ENCODE measurements at regions of chr17 and their contacts with region 1.

Region 1: DNA sequence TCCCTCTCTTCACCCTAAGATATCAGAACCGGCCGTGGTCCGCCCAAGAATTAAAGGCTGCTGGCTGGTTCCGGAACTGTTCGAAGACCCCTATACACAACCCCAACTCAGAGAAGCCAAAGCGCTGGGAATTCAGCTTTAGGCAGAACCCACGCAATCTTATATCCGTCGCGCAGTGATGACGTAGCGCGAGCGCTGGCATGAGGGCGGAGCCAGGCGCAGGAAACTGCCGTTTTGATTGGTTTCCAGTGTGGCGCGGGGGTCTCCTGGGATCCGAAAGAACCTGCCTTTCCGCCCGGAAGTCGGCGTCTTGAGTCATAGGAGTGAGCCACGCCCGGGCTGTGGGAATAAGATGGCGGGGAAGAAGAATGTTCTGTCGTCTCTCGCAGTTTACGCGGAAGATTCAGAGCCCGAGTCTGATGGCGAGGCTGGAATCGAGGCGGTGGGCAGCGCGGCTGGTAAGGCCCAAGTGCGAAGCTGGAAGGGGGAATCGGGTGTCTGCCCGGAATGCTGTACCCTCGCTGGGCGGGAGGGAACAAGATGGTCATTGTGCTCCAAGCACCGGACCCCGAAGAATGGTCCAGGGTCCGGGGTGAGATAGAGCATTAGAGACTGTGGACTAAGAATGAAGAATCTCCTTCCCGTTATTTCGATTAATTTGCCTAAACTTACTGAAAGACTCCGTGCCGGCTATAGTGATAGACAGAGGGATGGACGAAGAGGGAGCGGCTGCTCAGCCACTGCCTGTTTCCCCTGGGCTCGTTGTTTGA is at the starts of genes RECQL5 and SAP30BP:
- DNase-seq: peak; percentile 100
- H3K4me3 Mint-ChIP-seq: no peak within 1 kb of the TSS
- H3K27ac Mint-ChIP-seq: no peak within 1 kb of the TSS
- H3K4me1 Mint-ChIP-seq: peaks cover 19% of the 10 kb centered on the region
- H3K27me3 Mint-ChIP-seq: no peaks in the 10 kb centered on the region
- total RNA-seq, gene RECQL5: 34.2 and 34.4 TPM in 2 replicates
- total RNA-seq, gene SAP30BP: 109 and 115 TPM in 2 replicates

Region 2: DNA sequence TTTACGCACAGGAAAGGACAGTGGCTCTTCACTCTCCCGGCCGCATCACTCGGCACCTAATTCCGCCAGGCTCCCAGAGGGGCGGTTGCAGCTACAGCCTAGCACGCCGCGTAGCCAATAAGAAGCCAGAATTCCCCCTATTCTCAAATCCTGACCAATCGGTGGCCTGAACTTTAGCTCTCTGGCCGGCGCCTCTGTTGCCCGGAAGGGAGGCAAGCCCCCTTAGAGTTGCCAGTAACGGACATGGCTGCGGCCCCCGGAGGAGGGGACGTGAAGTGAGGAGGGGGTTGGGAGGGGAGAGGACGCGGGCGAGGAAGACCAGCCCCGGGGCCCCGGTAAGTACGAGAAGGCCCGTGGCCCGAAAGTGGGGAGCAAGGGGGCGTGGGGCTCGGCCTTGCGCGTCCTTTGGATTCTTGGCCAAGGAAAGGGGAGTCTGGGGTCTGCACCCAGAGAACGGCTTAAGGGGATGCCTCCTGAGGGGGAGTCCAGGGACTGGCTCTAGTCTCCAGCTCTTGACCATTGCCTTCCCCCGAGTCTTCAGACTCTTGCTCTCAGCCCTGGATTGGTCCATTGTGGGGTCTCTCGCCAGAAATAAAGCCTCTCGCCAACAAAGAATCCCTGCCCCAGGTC is 210.7 kb before region 1 on chr17 and contains the start of gene TMEM94:
- intact Hi-C with region 1: loop called (anchors 1 kb)
- DNase-seq: peak; percentile 97
- H3K4me3 Mint-ChIP-seq: peak within 1 kb of the TSS; percentile 93
- H3K27ac Mint-ChIP-seq: peak within 1 kb of the TSS; percentile 91
- H3K4me1 Mint-ChIP-seq: peaks cover 30% of the 10 kb centered on the region
- H3K27me3 Mint-ChIP-seq: no peaks in the 10 kb centered on the region
- total RNA-seq, gene TMEM94: 68.9 and 69.5 TPM in 2 replicates

Region 3: DNA sequence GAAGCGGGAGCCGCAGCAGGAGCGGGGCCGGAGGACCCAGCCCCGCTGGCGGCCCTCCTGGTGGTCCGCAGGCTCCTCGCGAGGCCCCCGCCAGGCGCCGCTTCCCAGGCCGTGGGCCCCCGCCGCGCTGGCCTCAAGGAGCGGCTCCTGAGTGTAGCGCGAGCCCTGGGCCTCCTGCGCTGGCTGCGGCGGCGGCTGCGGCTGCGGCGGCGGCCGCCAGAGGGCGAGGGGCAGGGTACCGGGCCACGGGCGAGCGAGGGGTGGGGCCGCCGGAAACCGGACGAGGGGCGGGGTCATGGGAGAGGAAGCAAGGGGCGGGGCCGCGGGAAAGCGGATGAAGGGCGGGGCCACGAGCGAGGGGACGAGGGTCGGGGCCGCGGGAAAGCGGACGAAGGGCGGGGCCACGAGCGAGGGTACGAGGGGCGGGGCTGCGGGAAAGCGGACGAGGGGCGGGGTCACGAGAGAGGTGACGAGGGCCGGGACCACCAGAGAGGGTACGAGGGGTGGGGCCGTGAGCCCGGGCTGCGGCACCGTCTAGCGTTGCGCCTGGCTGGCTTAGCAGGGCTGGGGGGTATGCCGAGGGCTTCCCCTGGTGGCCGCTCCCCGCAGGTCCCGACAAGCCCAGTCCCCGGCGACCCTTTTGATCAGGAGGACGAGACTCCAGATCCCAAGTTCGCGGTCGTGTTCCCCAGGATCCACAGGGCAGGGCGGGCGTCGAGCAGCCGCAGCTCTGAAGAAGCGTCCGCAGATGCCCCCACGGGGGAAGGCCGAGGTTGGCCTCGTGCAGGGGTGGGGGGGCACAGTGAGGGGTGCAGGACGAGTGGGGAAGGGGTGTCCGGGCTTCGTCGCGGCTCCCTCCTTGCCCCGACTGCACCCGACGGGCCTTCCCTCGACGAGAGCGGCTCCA is 77.9 kb before region 1 on chr17:
- intact Hi-C with region 1: loop called (anchors 2 kb)
- DNase-seq: peak; percentile 97
- H3K4me3 Mint-ChIP-seq: peak overlapping the region; percentile 80
- H3K27ac Mint-ChIP-seq: peak overlapping the region; percentile 66
- H3K4me1 Mint-ChIP-seq: peaks cover 2% of the 10 kb centered on the region
- H3K27me3 Mint-ChIP-seq: peaks cover 27% of the 10 kb centered on the region

Region 4: GRCh38 chr17:75707131-75707571 is 39.9 kb after region 1 on chr17:
- intact Hi-C with region 1: no loop called
- DNase-seq: no peak
- H3K4me3 Mint-ChIP-seq: no peak overlapping the region
- H3K27ac Mint-ChIP-seq: no peak overlapping the region
- H3K4me1 Mint-ChIP-seq: no peaks in the 10 kb centered on the region
- H3K27me3 Mint-ChIP-seq: peaks cover 4% of the 10 kb centered on the region